ENCODE measurements at regions of chr22 and their contacts with region 1.

Region 1: DNA sequence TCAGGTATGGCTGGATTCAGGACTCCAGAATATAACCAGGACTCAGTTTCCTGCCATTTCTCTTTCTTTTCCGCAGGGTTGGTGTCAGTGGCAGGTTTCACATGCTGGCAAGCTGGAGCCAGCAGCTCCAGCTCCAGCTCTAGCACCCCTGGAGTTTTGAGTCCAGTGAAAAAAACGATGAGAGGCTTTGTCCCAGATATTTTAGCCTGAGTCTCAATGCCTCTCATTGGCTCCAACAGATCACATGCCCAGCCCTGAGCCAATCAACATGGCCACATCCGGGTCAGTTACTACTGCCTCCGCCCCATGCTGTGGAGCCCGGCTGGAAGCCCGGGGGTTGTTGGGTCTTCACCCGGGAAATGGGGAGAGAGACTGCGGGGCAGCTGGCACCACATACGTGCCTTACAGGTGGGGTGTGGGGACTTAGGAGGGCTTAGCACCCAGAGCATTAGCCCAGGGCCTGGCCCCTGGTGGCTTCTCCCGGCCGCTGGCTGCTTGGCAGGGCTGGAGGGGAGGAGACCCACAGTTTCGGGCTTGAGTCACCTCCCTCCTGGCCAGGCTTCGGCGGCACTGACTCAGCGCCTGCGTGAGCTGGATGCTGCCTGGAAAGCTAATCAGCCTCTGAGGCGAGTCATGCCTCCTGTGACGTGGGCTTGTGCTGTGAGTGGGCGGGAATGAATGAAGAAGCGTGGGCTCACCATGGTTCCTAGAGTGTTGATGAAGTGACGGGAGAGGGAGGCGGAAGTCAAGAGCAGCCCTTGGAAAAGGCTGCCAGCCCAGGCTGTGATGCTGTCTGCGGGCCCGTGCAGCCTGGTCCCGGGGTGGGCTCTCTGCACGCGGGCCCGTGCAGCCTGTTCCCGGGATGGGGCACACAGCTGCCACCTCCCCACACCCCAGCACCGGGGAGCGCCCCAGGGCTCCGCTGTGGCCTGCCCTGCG is 15.3 kb upstream of the MRTFA start:
- DNase-seq: peak; percentile 95 to 99
- H3K4me3 ChIP-seq: peak overlapping the region; percentile 68
- H3K27ac ChIP-seq: peak overlapping the region; percentile 98
- H3K4me1 ChIP-seq: peaks cover 15% of the 10 kb centered on the region
- H3K27me3 ChIP-seq: no peaks in the 10 kb centered on the region
- CTCF ChIP-seq: no peak

Region 2: GRCh38 chr22:40374567-40374966 is 277.3 kb before region 1 on chr22:
- CTCF ChIA-PET with region 1: no interaction called
- POLR2A ChIA-PET with region 1: no interaction called
- intact Hi-C with region 1: loop called (anchors 5 kb)
- DNase-seq: no peak
- H3K4me3 ChIP-seq: no peak overlapping the region
- H3K27ac ChIP-seq: no peak overlapping the region
- H3K4me1 ChIP-seq: peaks cover 11% of the 10 kb centered on the region; the same call in 1 of the 2 replicates
- H3K27me3 ChIP-seq: no peaks in the 10 kb centered on the region
- CTCF ChIP-seq: no peak

Region 3: DNA sequence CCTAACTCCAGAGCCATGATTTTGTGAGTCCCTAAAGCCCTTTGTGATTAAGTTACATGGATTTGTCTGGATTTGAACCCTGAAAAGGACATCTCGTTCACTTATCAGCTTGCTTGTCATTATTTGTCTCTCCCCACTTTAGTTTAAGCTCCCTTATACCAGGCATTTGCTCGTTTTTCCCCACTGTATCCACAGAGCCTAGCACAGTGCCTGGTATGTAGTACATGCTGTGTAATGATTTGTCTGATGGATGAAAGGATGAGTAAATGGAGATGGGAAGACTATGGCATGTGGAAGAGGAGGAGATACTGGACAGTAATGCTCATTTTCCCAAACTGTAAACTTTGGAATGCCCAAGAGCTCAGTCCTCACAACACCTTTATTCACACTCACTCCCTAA is 18.2 kb after region 1 on chr22:
- CTCF ChIA-PET with region 1: no interaction called
- POLR2A ChIA-PET with region 1: no interaction called
- intact Hi-C with region 1: no loop called
- DNase-seq: no peak
- H3K4me3 ChIP-seq: no peak overlapping the region
- H3K27ac ChIP-seq: no peak overlapping the region
- H3K4me1 ChIP-seq: peaks cover 11% of the 10 kb centered on the region
- H3K27me3 ChIP-seq: no peaks in the 10 kb centered on the region
- CTCF ChIP-seq: no peak

Region 4: DNA sequence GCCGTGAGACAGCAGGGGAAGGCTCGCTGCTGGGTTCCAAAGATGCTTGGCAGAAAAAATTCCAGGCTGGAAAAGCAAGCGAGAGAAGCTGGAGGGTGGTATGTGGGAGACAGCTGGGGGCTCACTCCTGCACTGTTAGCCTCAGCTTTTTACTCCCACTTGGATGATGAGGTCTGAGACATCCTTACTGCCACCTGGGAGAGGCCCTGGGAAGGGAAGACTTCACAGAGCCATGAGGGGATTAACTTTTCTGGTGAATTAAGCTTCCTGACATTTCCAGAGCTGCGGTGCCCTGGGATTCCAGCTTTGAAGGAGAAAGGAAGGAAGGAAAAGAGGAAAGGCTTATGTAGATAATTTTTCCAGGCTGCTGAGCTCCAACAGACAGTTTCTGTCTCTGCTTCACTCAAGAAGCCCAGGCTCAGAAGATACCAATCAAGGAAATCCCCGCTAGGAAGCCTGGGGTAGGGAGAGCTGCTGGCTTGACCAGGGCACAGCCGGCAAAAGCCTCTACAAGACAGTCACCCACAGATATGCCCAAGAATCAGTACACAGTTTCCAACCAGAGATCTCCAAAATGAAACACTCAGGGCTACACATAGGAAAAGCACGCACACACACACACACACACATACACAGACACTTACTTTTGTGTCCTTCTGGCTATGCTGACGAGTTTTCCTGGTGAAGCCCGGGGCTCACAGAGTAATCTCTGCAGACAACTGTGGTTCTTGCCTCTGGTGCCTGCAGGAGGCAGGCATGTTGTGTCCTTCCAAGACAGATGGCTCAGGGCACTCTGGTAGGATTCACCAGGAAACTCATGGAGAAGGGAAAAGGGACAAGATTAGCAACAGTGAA is 28.4 kb after region 1 on chr22:
- CTCF ChIA-PET with region 1: interaction called, 6 read pairs
- POLR2A ChIA-PET with region 1: interaction called, 8 read pairs
- intact Hi-C with region 1: loop called (anchors 1 kb)
- DNase-seq: no peak
- H3K4me3 ChIP-seq: no peak overlapping the region
- H3K27ac ChIP-seq: no peak overlapping the region
- H3K4me1 ChIP-seq: peaks cover 13% of the 10 kb centered on the region
- H3K27me3 ChIP-seq: no peaks in the 10 kb centered on the region
- CTCF ChIP-seq: no peak

Region 5: DNA sequence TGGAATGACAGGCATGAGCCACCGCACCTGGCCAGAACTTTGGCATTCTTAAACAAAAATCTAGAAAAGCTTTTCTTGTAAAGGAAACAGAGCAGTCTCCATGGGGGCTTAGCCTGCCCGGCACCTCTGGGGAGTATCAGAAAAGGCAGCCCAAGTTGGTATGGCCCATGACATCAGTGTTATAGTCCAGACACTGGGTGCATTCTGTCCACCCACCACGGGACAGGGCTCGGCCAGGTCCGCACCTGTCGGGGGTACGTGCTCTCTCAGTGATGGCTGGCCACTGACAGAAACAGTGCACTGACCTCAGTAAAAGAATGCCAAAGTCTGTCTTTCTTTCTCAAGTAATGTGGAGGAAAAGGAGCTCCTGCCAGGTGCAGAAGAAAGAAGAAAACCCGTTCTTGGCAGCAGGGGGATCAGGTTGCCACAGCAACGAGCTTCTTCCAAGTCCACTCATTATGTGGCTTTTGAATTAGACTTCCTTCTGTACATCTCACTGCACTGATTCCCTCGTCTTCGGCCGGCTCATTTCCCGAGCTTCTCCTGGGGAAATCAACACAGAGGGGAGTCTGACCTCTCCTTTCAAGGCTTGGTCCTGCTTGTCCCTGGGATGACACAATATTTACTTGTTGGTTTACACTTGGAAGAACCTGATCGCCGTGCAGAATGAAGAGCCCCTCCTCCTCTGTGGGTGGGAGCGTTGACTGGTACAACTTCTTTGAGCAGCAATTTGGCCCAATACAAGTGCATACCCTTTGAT is 62.5 kb after region 1 on chr22:
- CTCF ChIA-PET with region 1: no interaction called
- POLR2A ChIA-PET with region 1: interaction called, 8 read pairs
- intact Hi-C with region 1: loop called (anchors 5 kb)
- DNase-seq: peak; percentile 62 to 98
- H3K4me3 ChIP-seq: no peak overlapping the region
- H3K27ac ChIP-seq: peak overlapping the region; percentile 38
- H3K4me1 ChIP-seq: peaks cover 56% of the 10 kb centered on the region
- H3K27me3 ChIP-seq: no peaks in the 10 kb centered on the region
- CTCF ChIP-seq: no peak

Region 6: GRCh38 chr22:40856513-40857308 is 204.9 kb after region 1 on chr22 and contains the starts of genes ST13 and XPNPEP3:
- CTCF ChIA-PET with region 1: no interaction called
- POLR2A ChIA-PET with region 1: interaction called, 12 read pairs
- intact Hi-C with region 1: no loop called
- DNase-seq: peak; percentile 92 to 95
- H3K4me3 ChIP-seq: peak within 1 kb of the TSS; percentile 98
- H3K27ac ChIP-seq: peak within 1 kb of the TSS; percentile 88
- H3K4me1 ChIP-seq: peaks cover 43% of the 10 kb centered on the region
- H3K27me3 ChIP-seq: no peaks in the 10 kb centered on the region
- CTCF ChIP-seq: peak; percentile 53
- total RNA-seq, gene ST13: 285 and 303 TPM in 2 replicates
- total RNA-seq, gene XPNPEP3: 34.3 and 42.7 TPM in 2 replicates